HAP-1 (cell line): ENCODE measurements at regions of chr16 and their contacts with region 1.

Region 1: GRCh38 chr16:1772736-1773584 is at the starts of genes EME2 and MRPS34:
- DNase-seq: peak; percentile 72 to 91
- H3K4me3 ChIP-seq: peak within 1 kb of the TSS; percentile 86
- H3K4me1 ChIP-seq: peaks cover 6% of the 10 kb centered on the region; the same call in 1 of the 2 replicates
- H3K27me3 ChIP-seq: no peaks in the 10 kb centered on the region

Region 2: DNA sequence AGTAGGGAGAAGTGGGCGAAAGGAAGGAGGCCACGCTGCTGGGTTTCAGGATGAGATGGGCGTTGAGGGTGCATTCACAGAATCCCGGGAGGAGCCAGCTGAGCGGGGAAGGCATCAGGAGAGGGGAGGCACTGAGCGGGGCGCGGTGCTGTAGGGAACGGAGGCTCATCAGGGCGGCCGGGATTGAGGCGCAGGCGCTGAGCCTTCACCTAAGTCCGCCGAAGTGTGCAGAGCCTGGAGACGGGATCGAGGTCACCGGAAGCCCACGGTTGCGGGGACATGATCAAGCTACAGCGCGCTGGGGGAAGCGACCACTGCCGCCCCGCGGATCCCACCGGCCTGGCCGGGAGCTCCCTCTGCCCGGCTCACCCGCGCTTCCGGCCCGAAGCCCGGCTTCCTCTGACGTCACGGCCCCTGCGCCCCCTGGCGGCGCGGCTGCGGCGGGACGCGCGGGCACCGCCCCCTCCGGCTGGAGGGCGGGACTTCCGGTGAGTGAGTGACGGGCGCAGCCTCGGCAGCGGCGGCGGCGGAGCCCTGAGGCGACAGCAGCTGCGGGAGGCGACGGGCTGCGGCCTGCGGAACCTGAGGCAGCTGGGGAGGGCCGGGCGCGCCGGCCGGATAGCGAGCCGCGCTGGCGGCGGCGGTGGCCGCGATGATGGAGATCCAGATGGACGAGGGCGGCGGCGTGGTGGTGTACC is 67.1 kb before region 1 on chr16 and contains the start of gene MAPK8IP3:
- in situ Hi-C with region 1: loop called (anchors 5 kb)
- DNase-seq: peak; percentile 81 to 91
- H3K4me3 ChIP-seq: peak within 1 kb of the TSS; percentile 82
- H3K4me1 ChIP-seq: peaks cover 10% of the 10 kb centered on the region
- H3K27me3 ChIP-seq: no peaks in the 10 kb centered on the region